ENCODE measurements at regions of chr7 and their contacts with region 1.

Region 1: GRCh38 chr7:128862571-128863432 is at the start of gene ATP6V1F:
- DNase-seq: peak; percentile 98 to 100 (median 99)
- H3K4me3 ChIP-seq: peak within 1 kb of the TSS; percentile 61 to 89
- H3K4me3 Mint-ChIP-seq: peak within 1 kb of the TSS; percentile 95 to 100 (median 98)
- H3K27ac ChIP-seq: peak within 1 kb of the TSS; percentile 79
- H3K27ac Mint-ChIP-seq: peak within 1 kb of the TSS; percentile 90 to 100 (median 97)
- H3K4me1 ChIP-seq: peaks cover 20% of the 10 kb centered on the region
- H3K4me1 Mint-ChIP-seq: peaks cover 21 to 42% (median 31%) of the 10 kb centered on the region in 4 donors
- H3K27me3 ChIP-seq: no peaks in the 10 kb centered on the region
- H3K27me3 Mint-ChIP-seq: no peaks in the 10 kb centered on the region
- total RNA-seq, gene ATP6V1F: 74.6 to 75.5 TPM

Region 2: DNA sequence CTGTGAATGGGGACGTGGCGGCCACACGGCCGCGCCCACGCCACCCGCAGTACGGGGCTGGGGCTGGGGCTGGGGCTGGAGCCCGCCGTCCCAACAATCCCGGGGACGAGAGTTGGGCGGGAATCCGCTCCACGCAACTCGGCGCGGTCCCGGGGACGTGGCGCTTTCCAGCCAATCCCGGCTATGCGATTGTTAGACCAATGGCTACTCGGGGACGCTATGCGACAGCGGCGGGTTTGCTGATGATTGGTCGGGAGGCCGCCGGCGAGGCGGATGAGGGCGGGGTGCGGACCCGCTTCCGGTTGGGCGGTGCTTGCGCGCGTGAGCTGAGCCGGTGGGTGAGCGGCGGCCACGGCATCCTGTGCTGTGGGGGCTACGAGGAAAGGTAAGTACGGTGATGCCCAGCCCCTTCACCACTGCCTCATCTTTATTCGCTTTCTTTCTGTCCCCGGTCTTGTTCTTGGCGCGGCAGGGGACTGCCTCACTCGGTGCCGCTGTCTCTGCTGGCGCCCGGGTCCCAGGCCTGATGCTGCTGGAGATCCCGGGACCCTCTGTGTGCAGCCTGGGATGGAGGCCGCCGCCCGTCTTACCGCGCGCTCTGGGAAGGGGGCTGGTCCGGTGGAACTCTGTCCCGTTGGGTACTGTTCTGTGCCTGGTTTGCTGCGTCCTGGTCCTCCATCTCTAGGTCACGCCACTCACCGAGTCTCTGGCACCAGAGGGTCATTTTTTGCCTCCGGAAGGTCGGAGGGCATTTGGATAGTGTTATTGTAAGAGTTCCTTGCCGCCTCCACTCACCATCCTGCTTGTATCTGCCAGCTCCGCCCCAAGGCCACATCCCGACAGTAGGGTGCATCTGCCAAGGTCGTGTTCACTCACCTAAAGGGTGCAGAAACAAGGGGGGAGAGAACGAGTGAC is 123.5 kb before region 1 on chr7 and contains the start of gene CALU:
- CTCF ChIA-PET with region 1: interaction called, 5 read pairs
- POLR2A ChIA-PET with region 1: interaction called, 12 read pairs
- intact Hi-C with region 1: loop called (anchors 1 kb)
- DNase-seq: peak; percentile 93 to 95 (median 94)
- H3K4me3 ChIP-seq: peak within 1 kb of the TSS; percentile 80 to 82
- H3K4me3 Mint-ChIP-seq: peak within 1 kb of the TSS; percentile 98 to 100 (median 99)
- H3K27ac ChIP-seq: peak within 1 kb of the TSS; percentile 91
- H3K27ac Mint-ChIP-seq: peak within 1 kb of the TSS; percentile 97 to 100 (median 98)
- H3K4me1 ChIP-seq: peaks cover 38% of the 10 kb centered on the region
- H3K4me1 Mint-ChIP-seq: peaks cover 27 to 50% (median 39%) of the 10 kb centered on the region in 4 donors
- H3K27me3 ChIP-seq: no peaks in the 10 kb centered on the region
- H3K27me3 Mint-ChIP-seq: peaks cover 0 to 3% of the 10 kb centered on the region in 2 donors
- total RNA-seq, gene CALU: 18.4 to 20.6 TPM

Region 3: GRCh38 chr7:128791121-128791961 is 71.5 kb before region 1 on chr7:
- CTCF ChIA-PET with region 1: no interaction called
- POLR2A ChIA-PET with region 1: interaction called, 8 read pairs
- intact Hi-C with region 1: loop called (anchors 2 kb)
- DNase-seq: peak; percentile 78 to 81 (median 79)
- H3K4me3 ChIP-seq: peak overlapping the region; percentile 42 to 62
- H3K4me3 Mint-ChIP-seq: peak overlapping the region; percentile 67 to 88 (median 80)
- H3K27ac ChIP-seq: peak overlapping the region; percentile 48
- H3K27ac Mint-ChIP-seq: peak overlapping the region in 5 of 7 donors; percentile 14 to 82 (median 54)
- H3K4me1 ChIP-seq: peaks cover 15% of the 10 kb centered on the region
- H3K4me1 Mint-ChIP-seq: peaks cover 9 to 25% (median 16%) of the 10 kb centered on the region in 4 donors
- H3K27me3 ChIP-seq: no peaks in the 10 kb centered on the region
- H3K27me3 Mint-ChIP-seq: no peaks in the 10 kb centered on the region

Region 4: GRCh38 chr7:128841921-128842651 is 20.7 kb before region 1 on chr7:
- CTCF ChIA-PET with region 1: interaction called, 3 read pairs
- POLR2A ChIA-PET with region 1: no interaction called
- intact Hi-C with region 1: loop called (anchors 1 kb)
- DNase-seq: peak in 4 of 5 donors; percentile 47 to 58 (median 50)
- H3K4me3 ChIP-seq: no peak overlapping the region
- H3K4me3 Mint-ChIP-seq: no peak overlapping the region
- H3K27ac ChIP-seq: no peak overlapping the region
- H3K27ac Mint-ChIP-seq: peak overlapping the region in 1 of 7 donors; percentile 37
- H3K4me1 ChIP-seq: no peaks in the 10 kb centered on the region
- H3K4me1 Mint-ChIP-seq: peaks cover 0 to 4% (median 0%) of the 10 kb centered on the region in 4 donors
- H3K27me3 ChIP-seq: no peaks in the 10 kb centered on the region
- H3K27me3 Mint-ChIP-seq: no peaks in the 10 kb centered on the region